ENCODE measurements at regions of chr5 and their contacts with region 1.

Region 1: GRCh38 chr5:95961617-95962474 is at the start of gene ELL2:
- DNase-seq: peak; percentile 98
- ATAC-seq: peak; percentile 88
- H3K4me3 Mint-ChIP-seq: peak within 1 kb of the TSS; percentile 94
- H3K27ac Mint-ChIP-seq: peak within 1 kb of the TSS; percentile 98
- H3K4me1 Mint-ChIP-seq: peaks cover 40% of the 10 kb centered on the region
- H3K27me3 Mint-ChIP-seq: peaks cover 7% of the 10 kb centered on the region
- total RNA-seq, gene ELL2: 11.0 to 11.1 TPM

Region 2: GRCh38 chr5:95870105-95870672 is 91.7 kb before region 1 on chr5:
- CTCF ChIA-PET with region 1: interaction called, 12 read pairs
- POLR2A ChIA-PET with region 1: interaction called, 3 read pairs
- DNase-seq: peak; percentile 42
- ATAC-seq: peak; percentile 56
- H3K4me3 Mint-ChIP-seq: peak overlapping the region; percentile 69
- H3K27ac Mint-ChIP-seq: peak overlapping the region; percentile 91
- H3K4me1 Mint-ChIP-seq: peaks cover 31% of the 10 kb centered on the region
- H3K27me3 Mint-ChIP-seq: no peaks in the 10 kb centered on the region

Region 3: DNA sequence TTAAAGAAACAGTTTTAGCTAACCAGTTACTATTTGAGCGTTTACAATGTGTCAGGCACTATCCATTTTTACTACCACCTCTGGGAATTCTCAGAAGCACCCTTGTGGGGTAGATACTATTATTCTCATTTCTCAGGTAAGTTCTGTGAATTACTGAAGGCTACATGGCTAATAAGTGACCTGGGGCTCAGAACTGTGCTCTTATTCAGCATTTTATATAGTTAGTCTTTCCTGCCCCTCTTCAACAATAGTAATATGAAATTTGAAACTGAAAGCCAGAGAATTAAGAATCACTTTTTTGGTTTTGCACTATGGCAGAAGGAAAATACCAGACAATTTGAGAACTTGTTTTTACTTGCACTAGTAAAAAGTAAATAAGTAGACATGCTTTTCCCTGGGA is 12.0 kb before region 1 on chr5:
- CTCF ChIA-PET with region 1: interaction called, 33 read pairs
- POLR2A ChIA-PET with region 1: interaction called, 10 read pairs
- DNase-seq: no peak
- ATAC-seq: no peak
- H3K4me3 Mint-ChIP-seq: no peak overlapping the region
- H3K27ac Mint-ChIP-seq: no peak overlapping the region
- H3K4me1 Mint-ChIP-seq: peaks cover 31% of the 10 kb centered on the region
- H3K27me3 Mint-ChIP-seq: no peaks in the 10 kb centered on the region

Region 4: DNA sequence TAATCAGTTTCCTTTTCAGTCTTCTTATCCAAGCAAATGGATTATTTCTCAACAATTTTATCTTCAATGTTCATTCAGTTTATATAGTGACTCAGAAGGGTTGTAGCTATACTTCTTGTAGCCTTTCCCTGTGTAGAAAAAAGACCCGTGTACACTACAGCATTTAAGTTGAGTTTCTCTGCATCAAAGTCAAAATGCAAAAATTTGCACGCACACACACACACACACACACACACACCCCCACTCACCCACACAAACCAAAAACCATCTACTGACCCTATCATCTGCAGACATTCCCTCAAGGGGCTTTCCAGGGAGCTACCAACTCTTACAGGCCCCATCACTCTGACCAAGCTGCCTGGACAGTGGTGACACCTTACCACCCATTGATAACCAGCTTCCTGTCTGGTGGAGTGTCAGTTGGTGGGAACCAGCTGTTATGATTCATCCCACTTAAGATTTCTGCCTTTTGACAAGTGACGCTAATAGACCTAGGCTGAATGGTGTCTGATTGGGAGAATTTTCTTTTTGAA is 12.0 kb after region 1 on chr5:
- CTCF ChIA-PET with region 1: interaction called, 13 read pairs
- POLR2A ChIA-PET with region 1: no interaction called
- DNase-seq: no peak
- ATAC-seq: peak; percentile 64
- H3K4me3 Mint-ChIP-seq: no peak overlapping the region
- H3K27ac Mint-ChIP-seq: peak overlapping the region; percentile 53
- H3K4me1 Mint-ChIP-seq: peaks cover 11% of the 10 kb centered on the region
- H3K27me3 Mint-ChIP-seq: peaks cover 9% of the 10 kb centered on the region

Measured in activated CD8-positive, alpha-beta T cell treated with anti-CD3 and anti-CD28 coated beads, Interleukin-2, amount 10 ng/mL, durations not matched to agents 7 days and 5 days (primary cell).